ENCODE measurements at regions of chr4 and their contacts with region 1.

Region 1: DNA sequence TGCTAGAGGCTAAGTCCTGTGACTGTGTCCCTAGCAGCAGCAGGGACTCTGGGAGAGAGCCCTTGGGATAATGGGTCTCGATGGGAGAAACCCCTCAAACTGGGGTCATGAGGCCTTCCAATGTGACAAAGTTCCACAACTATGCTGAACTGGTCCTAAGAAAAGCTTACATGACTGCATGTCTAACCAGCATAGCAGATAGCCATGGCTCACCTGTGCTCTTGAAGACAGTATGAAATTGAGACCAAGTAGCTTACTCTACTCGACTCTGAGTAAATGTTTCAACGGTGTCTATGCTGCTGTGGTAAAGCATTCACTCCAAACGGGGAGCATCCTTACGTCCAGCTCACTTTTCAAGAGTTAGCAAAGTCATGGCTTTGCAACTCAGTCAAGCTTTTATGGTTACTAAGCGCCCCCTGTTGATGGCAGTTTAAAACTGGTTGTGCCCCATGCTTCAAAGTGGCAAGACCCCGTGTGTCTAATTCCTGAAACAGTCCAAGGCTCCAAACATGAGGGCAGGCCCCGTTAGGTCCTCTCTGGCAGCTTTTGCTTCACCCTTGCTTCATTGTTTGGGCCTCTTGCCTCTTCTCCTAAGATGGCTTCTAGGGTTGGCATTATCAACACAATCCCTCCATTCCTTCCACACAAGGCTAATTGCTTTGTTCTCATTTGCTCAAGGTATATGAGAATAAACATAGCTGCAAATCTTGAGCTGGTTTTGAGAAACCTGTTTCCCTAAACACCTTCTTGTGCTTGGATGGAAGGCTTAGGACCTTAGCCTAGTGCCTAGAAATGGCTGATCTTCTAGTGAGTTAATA is 46.6 kb downstream of the CCNG2 start:
- DNase-seq: peak; percentile 35
- ATAC-seq: peak; percentile 88
- H3K4me3 Mint-ChIP-seq: no peak overlapping the region
- H3K27ac Mint-ChIP-seq: no peak overlapping the region
- H3K4me1 Mint-ChIP-seq: peaks cover 4% of the 10 kb centered on the region
- H3K27me3 Mint-ChIP-seq: no peaks in the 10 kb centered on the region
- CTCF ChIP-seq: peak; percentile 86

Region 2: DNA sequence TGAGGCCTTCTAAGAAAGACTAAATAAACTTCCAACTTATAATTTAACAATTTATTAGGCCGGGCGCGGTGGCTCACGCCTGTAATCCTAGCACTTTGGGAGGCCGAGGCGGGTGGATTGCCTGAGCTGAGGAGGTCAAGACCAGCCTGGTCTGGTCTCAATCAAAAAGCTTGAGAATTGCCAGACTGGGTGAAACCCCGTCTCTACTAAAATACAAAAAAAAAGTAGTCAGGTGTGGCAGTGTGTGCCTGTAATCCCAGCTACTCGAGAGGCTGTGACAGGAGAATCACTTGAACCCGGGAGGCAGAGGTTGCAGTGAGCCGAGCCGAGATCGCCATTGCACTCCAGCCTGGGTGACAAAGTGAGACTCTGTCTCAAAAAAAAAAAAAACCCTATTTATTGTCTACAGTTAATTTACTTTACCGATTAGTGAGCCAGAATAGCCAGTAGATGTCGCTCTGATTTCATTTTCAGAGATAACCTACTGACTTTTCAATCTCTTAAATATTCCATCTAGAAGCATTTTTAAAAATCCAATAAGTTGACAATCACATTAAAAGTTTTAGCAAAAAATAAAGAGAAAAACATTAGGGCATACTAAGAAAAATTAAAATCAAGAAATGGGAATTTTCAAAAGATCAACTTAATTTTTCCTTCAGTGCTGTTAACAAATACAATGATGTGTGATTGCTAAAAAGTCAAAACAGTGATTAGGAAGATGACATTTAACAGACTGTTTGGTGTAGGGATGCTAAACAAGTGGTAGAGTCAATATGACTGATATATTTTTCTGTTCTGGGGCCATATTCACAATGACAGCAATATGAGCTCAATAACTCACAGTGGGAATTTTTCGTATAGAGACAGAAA is 772.8 kb before region 1 on chr4:
- CTCF ChIA-PET with region 1: interaction called, 3 read pairs
- POLR2A ChIA-PET with region 1: no interaction called
- intact Hi-C with region 1: loop called (anchors 2 kb)
- DNase-seq: no peak
- ATAC-seq: peak; percentile 25
- H3K4me3 Mint-ChIP-seq: no peak overlapping the region
- H3K27ac Mint-ChIP-seq: no peak overlapping the region
- H3K4me1 Mint-ChIP-seq: peaks cover 13% of the 10 kb centered on the region
- H3K27me3 Mint-ChIP-seq: peaks cover 9% of the 10 kb centered on the region
- CTCF ChIP-seq: peak; percentile 62

Region 3: DNA sequence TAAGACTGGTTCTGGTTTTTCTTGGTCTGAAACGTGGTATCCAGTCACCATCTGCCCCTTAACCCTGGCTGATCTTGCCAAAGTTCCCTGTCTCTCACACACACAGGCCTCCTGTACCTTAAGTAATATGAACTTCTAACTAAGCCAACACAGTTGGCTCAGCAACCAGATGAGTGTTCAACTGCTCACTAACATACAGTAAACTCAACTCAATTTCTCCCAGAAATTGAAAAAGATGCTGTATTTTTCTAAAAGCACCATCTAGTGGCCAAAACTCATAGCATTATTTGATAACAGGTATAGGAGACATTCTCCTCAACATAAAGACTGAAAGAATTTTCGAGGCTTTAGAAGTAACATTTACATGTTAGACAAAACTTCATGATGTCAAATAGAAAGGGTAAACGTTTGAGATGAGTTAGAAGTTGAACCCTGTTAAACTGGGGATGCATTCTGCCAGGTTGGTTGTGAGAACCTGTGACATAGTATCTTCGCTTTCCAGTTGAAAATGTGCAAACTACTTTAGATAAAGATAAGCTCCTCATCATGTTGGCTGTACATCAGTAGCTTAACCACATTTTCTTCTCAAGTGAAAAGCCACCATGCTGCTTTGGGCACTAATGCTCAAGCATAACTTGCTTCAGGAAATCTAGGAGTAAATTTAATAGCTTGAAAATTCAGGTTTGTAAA is 159.0 kb before region 1 on chr4:
- CTCF ChIA-PET with region 1: interaction called, 88 read pairs
- POLR2A ChIA-PET with region 1: interaction called, 3 read pairs
- intact Hi-C with region 1: no loop called
- DNase-seq: no peak
- ATAC-seq: no peak
- H3K4me3 Mint-ChIP-seq: no peak overlapping the region
- H3K27ac Mint-ChIP-seq: no peak overlapping the region
- H3K4me1 Mint-ChIP-seq: peaks cover 17% of the 10 kb centered on the region
- H3K27me3 Mint-ChIP-seq: no peaks in the 10 kb centered on the region
- CTCF ChIP-seq: peak; percentile 31

Region 4: GRCh38 chr4:77062856-77063255 is 140.7 kb before region 1 on chr4:
- CTCF ChIA-PET with region 1: interaction called, 10 read pairs
- POLR2A ChIA-PET with region 1: no interaction called
- intact Hi-C with region 1: no loop called
- DNase-seq: no peak
- ATAC-seq: no peak
- H3K4me3 Mint-ChIP-seq: no peak overlapping the region
- H3K27ac Mint-ChIP-seq: no peak overlapping the region
- H3K4me1 Mint-ChIP-seq: peaks cover 5% of the 10 kb centered on the region
- H3K27me3 Mint-ChIP-seq: no peaks in the 10 kb centered on the region
- CTCF ChIP-seq: no peak

Region 5: GRCh38 chr4:77104791-77105540 is 98.6 kb before region 1 on chr4:
- CTCF ChIA-PET with region 1: interaction called, 263 read pairs
- POLR2A ChIA-PET with region 1: no interaction called
- intact Hi-C with region 1: no loop called
- DNase-seq: no peak
- ATAC-seq: no peak
- H3K4me3 Mint-ChIP-seq: no peak overlapping the region
- H3K27ac Mint-ChIP-seq: no peak overlapping the region
- H3K4me1 Mint-ChIP-seq: peaks cover 19% of the 10 kb centered on the region
- H3K27me3 Mint-ChIP-seq: no peaks in the 10 kb centered on the region
- CTCF ChIP-seq: no peak

Region 6: GRCh38 chr4:77126809-77127208 is 76.8 kb before region 1 on chr4:
- CTCF ChIA-PET with region 1: interaction called, 133 read pairs
- POLR2A ChIA-PET with region 1: interaction called, 8 read pairs
- intact Hi-C with region 1: no loop called
- DNase-seq: no peak
- ATAC-seq: peak; percentile 79
- H3K4me3 Mint-ChIP-seq: peak overlapping the region; percentile 59
- H3K27ac Mint-ChIP-seq: peak overlapping the region; percentile 89
- H3K4me1 Mint-ChIP-seq: peaks cover 74% of the 10 kb centered on the region
- H3K27me3 Mint-ChIP-seq: no peaks in the 10 kb centered on the region
- CTCF ChIP-seq: no peak

Region 7: GRCh38 chr4:77163636-77164035 is 40.0 kb before region 1 on chr4:
- CTCF ChIA-PET with region 1: interaction called, 60 read pairs
- POLR2A ChIA-PET with region 1: interaction called, 126 read pairs
- intact Hi-C with region 1: loop called (anchors 1 kb)
- DNase-seq: no peak
- ATAC-seq: no peak
- H3K4me3 Mint-ChIP-seq: no peak overlapping the region
- H3K27ac Mint-ChIP-seq: peak overlapping the region; percentile 75
- H3K4me1 Mint-ChIP-seq: peaks cover 53% of the 10 kb centered on the region
- H3K27me3 Mint-ChIP-seq: no peaks in the 10 kb centered on the region
- CTCF ChIP-seq: no peak

Region 8: DNA sequence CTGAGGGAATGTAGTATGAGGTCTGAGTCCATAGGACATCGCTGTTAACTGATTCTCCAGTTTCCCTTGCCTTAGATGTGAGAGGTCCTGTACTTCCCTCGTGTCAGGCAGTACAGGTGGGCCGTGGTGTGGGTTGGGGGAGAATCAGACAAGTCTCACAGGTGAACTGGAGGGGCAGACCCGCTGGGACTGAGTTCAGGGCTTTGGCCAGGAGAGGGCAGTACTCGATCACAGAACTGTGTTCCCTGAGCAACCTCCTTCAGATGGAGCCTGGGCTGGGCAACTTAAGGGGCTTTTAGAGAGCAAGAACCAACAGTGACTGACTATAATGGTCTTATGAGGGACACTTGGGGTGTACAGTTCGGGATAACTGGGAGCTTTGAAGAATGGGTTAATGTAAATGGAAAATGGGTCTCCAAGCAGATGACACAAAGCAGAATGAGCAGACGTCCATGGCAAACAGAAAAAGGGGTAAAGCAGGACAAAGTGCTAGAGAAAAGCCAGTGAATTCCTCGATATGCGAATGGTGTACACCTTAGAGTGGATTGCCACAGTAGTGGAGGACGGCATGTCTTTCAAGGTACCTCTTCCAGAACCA is 37.0 kb after region 1 on chr4:
- CTCF ChIA-PET with region 1: no interaction called
- POLR2A ChIA-PET with region 1: no interaction called
- intact Hi-C with region 1: no loop called
- DNase-seq: peak; percentile 46
- ATAC-seq: peak; percentile 56
- H3K4me3 Mint-ChIP-seq: no peak overlapping the region
- H3K27ac Mint-ChIP-seq: no peak overlapping the region
- H3K4me1 Mint-ChIP-seq: no peaks in the 10 kb centered on the region
- H3K27me3 Mint-ChIP-seq: no peaks in the 10 kb centered on the region
- CTCF ChIP-seq: no peak